GM23248 (cell line): ENCODE measurements at regions of chr2 and their contacts with region 1.

Region 1: DNA sequence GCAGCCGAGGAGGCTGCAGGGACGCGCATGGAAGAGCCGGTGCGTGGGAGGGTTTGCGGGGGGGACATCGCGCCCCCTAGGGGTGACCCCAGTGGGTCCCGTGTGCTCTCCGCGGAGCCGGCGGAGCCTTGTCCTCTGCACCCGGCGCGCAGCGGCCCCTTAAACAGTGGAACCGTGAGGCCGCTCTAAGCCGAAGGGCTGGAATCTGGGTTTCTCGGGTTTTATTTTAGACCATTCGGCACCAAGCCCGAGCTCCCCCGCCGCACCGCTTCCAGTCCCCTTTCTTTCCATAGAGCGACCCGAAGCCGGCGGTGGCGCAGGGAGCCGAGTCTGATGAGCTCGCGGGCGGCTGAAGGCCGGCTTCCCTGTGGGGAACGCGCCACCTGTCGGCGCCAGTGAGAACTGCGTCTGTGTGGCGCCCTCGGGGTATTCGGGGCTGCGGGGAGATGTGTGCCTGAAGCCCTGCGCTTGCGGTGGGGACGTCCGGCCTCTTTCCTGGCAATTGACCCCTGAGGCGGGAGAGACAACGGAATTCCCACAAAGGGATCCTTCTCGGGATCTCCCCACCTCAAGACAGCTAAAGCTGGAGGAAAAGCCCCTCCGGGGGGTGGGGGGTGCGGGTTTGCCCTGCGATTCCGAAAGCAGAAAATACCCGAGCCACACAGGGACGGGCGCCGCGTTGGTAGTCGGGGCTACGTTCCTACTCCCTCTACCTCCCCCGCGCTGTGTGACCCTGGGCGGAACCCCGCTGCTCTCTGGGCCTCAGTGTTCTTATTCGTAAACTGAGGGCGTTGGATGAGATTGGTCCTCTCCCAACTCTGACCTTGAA is 8.2 kb upstream of the EN1 start:
- DNase-seq: peak; percentile 94
- H3K4me3 ChIP-seq: peak overlapping the region; percentile 73
- H3K27ac ChIP-seq: peak overlapping the region; percentile 27; the same call in 1 of the 2 replicates
- H3K4me1 ChIP-seq: 0 out of 2 replicates have a peak, but pooled peaks cover 4% of the 10 kb centered on the region
- H3K27me3 ChIP-seq: peaks cover 18% of the 10 kb centered on the region

Region 2: DNA sequence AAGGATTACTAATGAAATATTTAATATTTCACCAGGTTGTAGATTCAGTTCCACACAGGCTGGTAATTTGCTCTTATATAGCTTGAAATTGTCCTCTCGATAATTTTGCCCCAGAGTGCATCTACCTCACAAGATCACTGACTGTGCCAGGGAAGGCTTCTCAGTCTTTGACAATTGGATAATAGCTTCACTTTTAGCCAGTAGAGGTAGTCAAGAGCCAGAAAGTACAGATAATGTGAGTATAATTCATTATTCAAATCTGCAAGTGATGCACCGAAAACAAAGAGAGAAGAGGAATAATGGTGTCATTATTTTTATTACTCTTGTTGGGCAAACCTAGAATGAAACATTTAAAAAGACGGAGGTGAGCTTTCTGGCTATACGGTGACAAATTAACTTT is 301.0 kb before region 1 on chr2:
- in situ Hi-C with region 1: loop called (anchors 25 kb)
- DNase-seq: peak; percentile 39
- H3K4me3 ChIP-seq: no peak overlapping the region
- H3K27ac ChIP-seq: no peak overlapping the region
- H3K4me1 ChIP-seq: no peaks in the 10 kb centered on the region
- H3K27me3 ChIP-seq: no peaks in the 10 kb centered on the region